Activated T-helper 1 cell treated with anti-CD3 and anti-CD28 coated beads, Interleukin-12 subunit alpha, Interleukin-12 subunit beta, Interleukin-2, Interleukin-4 antibody, amounts not matched to agents 30 ng/mL and 10 ng/mL and 1 ng/mL, durations not matched to agents 14 hours and 24 hours and 36 hours (primary cell): ENCODE measurements at regions of chr5 and their contacts with region 1.

Region 1: GRCh38 chr5:157026789-157027424 is 32.0 kb downstream of the HAVCR1 start:
- DNase-seq: no peak
- H3K4me3 Mint-ChIP-seq: no peak overlapping the region
- H3K27ac Mint-ChIP-seq: peak overlapping the region; percentile 90
- H3K4me1 Mint-ChIP-seq: peaks cover 81% of the 10 kb centered on the region
- H3K27me3 Mint-ChIP-seq: peaks cover 3% of the 10 kb centered on the region

Region 2: DNA sequence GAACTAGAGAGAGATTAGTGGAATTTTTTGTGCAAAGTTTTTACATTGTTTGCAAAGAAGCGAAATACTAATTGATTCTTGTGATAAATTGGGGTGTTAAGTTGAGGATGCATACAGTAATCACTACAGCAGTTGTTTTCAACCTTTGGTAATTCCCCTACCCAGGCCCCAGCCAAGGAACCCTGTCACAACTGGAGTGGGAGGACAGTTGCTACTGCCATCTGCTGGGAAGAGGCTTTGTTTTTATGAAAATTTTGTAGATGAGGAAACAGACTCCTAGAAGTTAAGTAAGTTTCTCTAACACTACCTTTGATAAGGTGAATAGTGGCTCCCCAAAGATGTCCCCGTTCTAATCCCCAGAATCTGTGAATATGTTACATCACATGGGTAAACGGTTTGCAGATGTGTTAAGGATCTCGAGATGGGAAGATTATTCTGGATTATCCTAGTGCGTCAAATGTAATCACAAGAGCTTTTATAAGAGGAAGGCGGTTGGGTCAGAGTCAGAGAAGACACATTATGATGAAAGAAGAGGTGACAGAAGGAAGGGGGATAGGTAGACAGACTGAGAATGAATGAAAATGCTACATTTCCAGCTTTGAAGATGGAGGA is 210.8 kb before region 1 on chr5:
- intact Hi-C with region 1: loop called (anchors 5 kb)
- DNase-seq: peak; percentile 45
- H3K4me3 Mint-ChIP-seq: no peak overlapping the region
- H3K27ac Mint-ChIP-seq: no peak overlapping the region
- H3K4me1 Mint-ChIP-seq: peaks cover 33% of the 10 kb centered on the region
- H3K27me3 Mint-ChIP-seq: no peaks in the 10 kb centered on the region

Region 3: GRCh38 chr5:156893517-156893916 is 133.4 kb before region 1 on chr5:
- intact Hi-C with region 1: no loop called
- DNase-seq: no peak
- H3K4me3 Mint-ChIP-seq: peak overlapping the region; percentile 32
- H3K27ac Mint-ChIP-seq: peak overlapping the region; percentile 94
- H3K4me1 Mint-ChIP-seq: peaks cover 60% of the 10 kb centered on the region
- H3K27me3 Mint-ChIP-seq: no peaks in the 10 kb centered on the region

Region 4: GRCh38 chr5:156947796-156948324 is 79.0 kb before region 1 on chr5:
- intact Hi-C with region 1: loop called (anchors 1 kb)
- DNase-seq: peak; percentile 46
- H3K4me3 Mint-ChIP-seq: peak overlapping the region; percentile 59
- H3K27ac Mint-ChIP-seq: peak overlapping the region; percentile 87
- H3K4me1 Mint-ChIP-seq: peaks cover 53% of the 10 kb centered on the region
- H3K27me3 Mint-ChIP-seq: no peaks in the 10 kb centered on the region

Region 5: DNA sequence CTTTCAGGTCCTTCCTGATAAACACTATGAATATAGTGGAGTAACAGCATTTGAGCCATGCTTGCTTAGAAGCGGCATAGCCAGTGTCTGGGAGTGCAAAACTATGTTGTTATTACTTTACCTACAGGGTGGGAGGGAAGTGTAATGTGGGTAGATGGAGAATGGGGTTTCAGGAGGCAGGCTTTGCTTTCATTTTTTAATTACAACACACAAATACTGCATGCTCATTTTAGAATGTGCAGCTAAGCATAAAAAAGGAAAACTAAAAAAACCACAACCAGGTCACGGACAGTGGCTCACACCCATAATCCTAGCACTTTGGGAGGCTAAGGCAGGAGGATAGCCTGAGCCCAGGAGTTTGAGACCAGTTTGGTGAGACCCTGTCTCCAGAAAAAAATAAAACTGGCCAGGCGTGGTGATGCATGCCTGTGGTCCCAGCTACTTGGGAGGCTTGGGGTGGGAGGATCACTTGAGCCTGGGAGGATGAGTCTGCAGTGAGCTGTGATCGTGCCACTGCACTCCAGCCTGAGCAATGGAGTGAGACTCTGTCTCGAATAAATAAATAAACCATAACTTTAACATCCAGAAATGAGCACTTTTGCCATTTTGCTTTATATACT is 11.8 kb after region 1 on chr5:
- intact Hi-C with region 1: loop called (anchors 1 kb)
- DNase-seq: no peak
- H3K4me3 Mint-ChIP-seq: no peak overlapping the region
- H3K27ac Mint-ChIP-seq: peak overlapping the region; percentile 74
- H3K4me1 Mint-ChIP-seq: peaks cover 37% of the 10 kb centered on the region
- H3K27me3 Mint-ChIP-seq: no peaks in the 10 kb centered on the region

Region 6: DNA sequence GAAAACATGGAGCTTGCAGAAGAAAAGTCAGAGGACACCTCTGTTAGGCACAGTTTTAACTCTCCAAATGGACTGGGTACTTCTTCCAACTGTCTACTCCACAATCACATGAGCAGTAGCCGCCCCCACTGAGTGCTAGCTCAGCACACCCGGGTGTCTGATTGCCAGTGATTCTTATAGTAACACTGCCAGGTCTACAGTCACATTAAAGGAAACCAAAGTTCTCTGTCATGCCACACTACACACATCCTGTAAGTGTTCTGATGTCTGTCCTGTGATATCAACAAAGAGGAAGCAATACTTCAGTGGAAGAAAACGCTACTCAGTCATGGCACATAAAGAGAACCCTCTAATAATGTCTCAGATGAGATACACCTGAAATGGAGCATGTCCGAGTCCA is 82.1 kb after region 1 on chr5 and contains the start of gene HAVCR2:
- intact Hi-C with region 1: loop called (anchors 1 kb)
- DNase-seq: peak; percentile 65
- H3K4me3 Mint-ChIP-seq: peak within 1 kb of the TSS; percentile 91
- H3K27ac Mint-ChIP-seq: peak within 1 kb of the TSS; percentile 94
- H3K4me1 Mint-ChIP-seq: peaks cover 63% of the 10 kb centered on the region
- H3K27me3 Mint-ChIP-seq: no peaks in the 10 kb centered on the region
- total RNA-seq, gene HAVCR2: 128 and 129 TPM in 2 replicates

Region 7: DNA sequence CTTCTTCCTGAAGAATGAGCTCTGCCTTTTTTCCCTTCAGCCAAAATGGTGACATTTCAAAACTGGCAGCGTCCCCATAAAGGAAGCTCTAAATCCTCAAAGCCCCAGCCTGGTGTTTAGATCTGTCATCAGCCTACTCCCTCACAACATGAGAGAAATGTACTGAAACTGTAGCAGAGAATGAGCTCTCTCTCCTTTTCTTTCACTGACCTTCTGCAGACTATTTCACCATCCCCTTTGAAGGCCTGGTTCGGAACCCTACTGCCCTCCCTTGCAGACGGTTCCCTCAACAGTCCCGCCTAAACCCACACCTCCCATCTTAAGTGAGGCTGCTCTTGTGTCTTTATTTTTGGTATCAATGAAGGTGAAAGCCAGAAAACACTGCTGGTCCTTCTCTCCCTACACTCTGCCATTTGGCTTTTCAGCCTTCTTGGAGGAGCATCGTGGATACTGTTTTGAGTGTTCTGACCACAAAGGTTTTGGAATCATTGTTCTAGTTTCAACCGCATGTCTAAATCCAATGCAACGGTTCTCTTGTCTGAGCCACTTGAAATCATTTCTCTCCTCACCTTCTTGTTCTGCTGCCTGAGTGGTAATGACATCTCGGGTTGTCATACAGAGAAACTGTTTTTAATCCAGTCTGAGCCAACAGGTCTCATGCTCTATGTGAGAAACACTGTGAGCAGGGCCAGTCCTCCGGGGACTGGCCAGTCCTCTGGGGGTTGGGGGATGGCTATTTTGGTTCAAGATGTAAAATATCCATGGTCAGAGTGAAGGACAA is 192.8 kb after region 1 on chr5:
- intact Hi-C with region 1: loop called (anchors 1 kb)
- DNase-seq: peak; percentile 43
- H3K4me3 Mint-ChIP-seq: peak overlapping the region; percentile 41
- H3K27ac Mint-ChIP-seq: peak overlapping the region; percentile 93
- H3K4me1 Mint-ChIP-seq: peaks cover 81% of the 10 kb centered on the region
- H3K27me3 Mint-ChIP-seq: no peaks in the 10 kb centered on the region